ENCODE measurements at regions of chr7 and their contacts with region 1.

Region 1: GRCh38 chr7:50206453-50207250 is 97.9 kb upstream of the IKZF1 start:
- DNase-seq: peak; percentile 90
- H3K4me3 Mint-ChIP-seq: peak overlapping the region; percentile 69
- H3K27ac Mint-ChIP-seq: peak overlapping the region; percentile 95
- H3K4me1 Mint-ChIP-seq: peaks cover 77% of the 10 kb centered on the region
- H3K27me3 Mint-ChIP-seq: no peaks in the 10 kb centered on the region

Region 2: GRCh38 chr7:50156706-50157105 is 49.9 kb before region 1 on chr7:
- intact Hi-C with region 1: loop called (anchors 1 kb)
- DNase-seq: peak; percentile 65
- H3K4me3 Mint-ChIP-seq: peak overlapping the region; percentile 50
- H3K27ac Mint-ChIP-seq: peak overlapping the region; percentile 85
- H3K4me1 Mint-ChIP-seq: peaks cover 31% of the 10 kb centered on the region
- H3K27me3 Mint-ChIP-seq: no peaks in the 10 kb centered on the region

Region 3: GRCh38 chr7:50251765-50252164 is 45.1 kb after region 1 on chr7:
- intact Hi-C with region 1: no loop called
- DNase-seq: no peak
- H3K4me3 Mint-ChIP-seq: no peak overlapping the region
- H3K27ac Mint-ChIP-seq: no peak overlapping the region
- H3K4me1 Mint-ChIP-seq: no peaks in the 10 kb centered on the region
- H3K27me3 Mint-ChIP-seq: no peaks in the 10 kb centered on the region

Region 4: DNA sequence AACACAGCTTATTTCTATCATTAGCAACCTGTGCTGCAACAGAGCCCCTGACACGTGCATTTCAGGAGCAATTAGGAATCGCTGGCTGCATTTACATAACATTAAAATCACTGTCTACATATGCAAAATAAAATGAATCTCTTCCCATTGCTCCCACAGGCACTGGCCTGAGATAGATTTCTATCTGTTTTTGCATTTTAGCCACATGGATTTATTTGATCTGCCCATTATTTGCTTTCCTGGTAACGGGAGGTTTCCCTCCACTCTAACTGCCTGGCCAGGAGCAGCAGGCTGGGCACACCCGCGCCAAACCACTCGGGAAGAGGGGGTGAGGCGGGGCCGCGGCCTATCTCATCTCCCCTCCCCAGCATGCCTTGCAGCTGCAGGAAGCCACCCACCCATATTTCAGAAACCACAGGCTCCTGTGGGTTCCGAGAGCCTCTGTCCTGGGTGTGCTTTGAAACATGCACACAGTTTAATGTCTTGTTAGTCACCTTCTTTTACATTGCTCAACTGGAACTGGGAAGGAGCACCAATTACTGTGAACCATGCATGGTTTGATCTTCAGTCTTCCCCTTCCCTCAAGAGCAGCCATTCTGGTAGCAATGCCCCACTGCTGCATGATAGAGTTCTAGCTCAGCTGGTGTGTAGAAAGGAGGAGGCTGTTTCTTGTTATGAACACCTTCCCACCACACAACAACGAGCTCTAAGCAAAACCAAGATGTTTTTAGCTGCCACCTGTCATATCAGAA is 60.2 kb after region 1 on chr7:
- intact Hi-C with region 1: loop called (anchors 1 kb)
- DNase-seq: peak; percentile 95
- H3K4me3 Mint-ChIP-seq: peak overlapping the region; percentile 86
- H3K27ac Mint-ChIP-seq: peak overlapping the region; percentile 95
- H3K4me1 Mint-ChIP-seq: peaks cover 84% of the 10 kb centered on the region
- H3K27me3 Mint-ChIP-seq: no peaks in the 10 kb centered on the region

Region 5: GRCh38 chr7:50281680-50282445 is 75.2 kb after region 1 on chr7:
- intact Hi-C with region 1: no loop called
- DNase-seq: peak; percentile 62
- H3K4me3 Mint-ChIP-seq: peak overlapping the region; percentile 62
- H3K27ac Mint-ChIP-seq: peak overlapping the region; percentile 49
- H3K4me1 Mint-ChIP-seq: peaks cover 38% of the 10 kb centered on the region
- H3K27me3 Mint-ChIP-seq: no peaks in the 10 kb centered on the region

Region 6: DNA sequence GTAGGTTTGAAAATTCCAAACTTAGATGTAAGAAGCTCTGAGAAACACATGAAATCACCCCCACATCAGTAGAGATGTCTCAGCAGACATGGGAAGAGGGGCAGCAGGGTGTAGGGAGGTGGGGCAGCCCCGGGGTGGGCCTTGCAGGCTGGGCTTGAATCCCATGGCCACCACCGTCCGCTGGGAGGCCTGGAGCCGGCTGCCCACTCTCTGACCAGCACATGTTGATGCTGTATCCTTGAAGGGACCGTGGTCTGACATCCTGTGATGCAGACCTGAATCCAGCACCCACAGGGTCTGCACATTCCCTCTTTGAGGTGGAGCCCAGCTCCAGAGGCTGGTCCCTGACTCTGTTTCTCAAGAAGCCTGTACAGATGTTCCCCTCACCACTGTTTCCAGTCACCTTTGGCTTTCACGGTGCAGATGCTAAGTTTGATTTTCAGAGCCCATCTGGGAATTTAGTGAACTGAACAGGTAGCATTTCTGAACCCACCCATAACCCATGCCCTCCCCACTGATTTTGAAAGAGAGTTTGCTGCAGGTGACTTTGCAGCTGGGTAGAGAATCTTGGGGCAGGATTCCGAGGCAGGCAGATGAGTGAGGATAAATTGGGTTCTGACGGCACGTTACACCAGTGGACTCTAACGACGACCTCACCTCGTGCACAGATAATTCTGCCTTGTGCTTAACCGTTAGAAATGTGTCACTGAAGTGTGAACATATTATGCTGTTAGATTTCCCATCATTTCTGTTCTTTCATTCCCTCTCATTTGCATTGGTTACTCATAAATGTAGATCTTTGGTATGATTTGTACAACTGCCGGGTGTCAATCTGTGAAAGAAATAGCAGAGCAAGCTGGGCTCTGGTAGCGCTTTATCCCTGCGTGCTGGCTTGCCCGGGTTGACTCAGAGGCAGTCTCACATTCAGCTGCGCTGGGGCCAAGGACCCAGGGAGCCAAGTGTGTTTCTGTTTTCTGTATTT is 143.6 kb after region 1 on chr7:
- intact Hi-C with region 1: loop called (anchors 1 kb)
- DNase-seq: peak; percentile 92
- H3K4me3 Mint-ChIP-seq: peak overlapping the region; percentile 76
- H3K27ac Mint-ChIP-seq: peak overlapping the region; percentile 95
- H3K4me1 Mint-ChIP-seq: peaks cover 95% of the 10 kb centered on the region
- H3K27me3 Mint-ChIP-seq: no peaks in the 10 kb centered on the region

Region 7: GRCh38 chr7:50397320-50397970 is 190.8 kb after region 1 on chr7:
- intact Hi-C with region 1: loop called (anchors 1 kb)
- DNase-seq: peak; percentile 87
- H3K4me3 Mint-ChIP-seq: peak overlapping the region; percentile 82
- H3K27ac Mint-ChIP-seq: peak overlapping the region; percentile 97
- H3K4me1 Mint-ChIP-seq: peaks cover 63% of the 10 kb centered on the region
- H3K27me3 Mint-ChIP-seq: no peaks in the 10 kb centered on the region

Region 8: DNA sequence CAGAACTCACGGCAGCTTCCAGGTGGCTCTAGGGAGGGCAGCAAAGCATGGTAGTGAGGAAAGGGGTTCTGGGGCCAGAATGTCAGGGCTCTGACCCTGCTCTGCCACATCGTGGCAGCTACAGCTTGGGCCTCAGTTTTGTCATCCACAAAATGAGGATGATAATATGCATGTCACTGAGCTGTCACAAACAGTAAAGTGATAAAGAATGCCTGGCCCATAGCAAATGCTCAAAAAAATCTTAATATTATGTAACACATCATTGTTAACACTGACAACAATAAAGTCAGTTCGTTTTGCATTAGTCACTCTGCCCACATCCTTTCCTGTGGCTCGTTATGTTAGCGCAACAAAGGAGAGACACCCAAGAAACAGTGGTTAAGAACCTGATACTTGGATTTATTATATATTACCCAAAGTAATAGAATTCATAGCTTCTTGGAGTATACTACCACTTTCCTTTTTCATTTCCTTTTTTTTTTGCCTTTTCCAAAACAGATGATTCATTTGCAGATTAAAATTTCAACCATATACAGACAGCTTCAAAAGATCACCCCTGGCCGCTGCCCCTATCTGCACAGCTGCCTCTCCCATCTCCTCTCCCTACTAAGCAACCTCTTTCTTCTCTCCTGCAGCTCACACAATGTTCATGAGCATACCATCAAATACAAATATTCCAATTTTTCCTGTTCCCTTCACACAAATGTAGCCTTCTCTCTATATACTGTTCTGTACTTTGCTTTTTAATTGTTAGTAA is 404.0 kb after region 1 on chr7:
- intact Hi-C with region 1: no loop called
- DNase-seq: peak; percentile 86
- H3K4me3 Mint-ChIP-seq: no peak overlapping the region
- H3K27ac Mint-ChIP-seq: no peak overlapping the region
- H3K4me1 Mint-ChIP-seq: peaks cover 24% of the 10 kb centered on the region
- H3K27me3 Mint-ChIP-seq: peaks cover 22% of the 10 kb centered on the region

Region 9: GRCh38 chr7:50664461-50664922 is 457.8 kb after region 1 on chr7:
- intact Hi-C with region 1: loop called (anchors 10 kb)
- DNase-seq: peak; percentile 68
- H3K4me3 Mint-ChIP-seq: no peak overlapping the region
- H3K27ac Mint-ChIP-seq: no peak overlapping the region
- H3K4me1 Mint-ChIP-seq: peaks cover 46% of the 10 kb centered on the region
- H3K27me3 Mint-ChIP-seq: peaks cover 2% of the 10 kb centered on the region

Measured in activated CD4-positive, alpha-beta T cell treated with anti-CD3 and anti-CD28 coated beads, Interleukin-2, amount 10 ng/mL, durations not matched to agents 24 days and 14 days (primary cell).